HepG2 (cell line): ENCODE measurements at regions of chr5 and their contacts with region 1.

Region 1: GRCh38 chr5:96297290-96297689 is 135.8 kb downstream of the PCSK1 start:
- DNase-seq: peak; percentile 40
- ATAC-seq: peak; percentile 61
- H3K4me3 ChIP-seq: no peak overlapping the region
- H3K27ac ChIP-seq: peak overlapping the region; percentile 85
- H3K4me1 ChIP-seq: peaks cover 80% of the 10 kb centered on the region
- H3K27me3 ChIP-seq: no peaks in the 10 kb centered on the region
- CTCF ChIP-seq: no peak
- EP300 ChIP-seq: no peak
- POLR2A ChIP-seq: no peak
- RAD21 ChIP-seq: no peak

Region 2: GRCh38 chr5:95864944-95865504 is 432.3 kb before region 1 on chr5:
- CTCF ChIA-PET with region 1: no interaction called
- POLR2A ChIA-PET with region 1: interaction called, 3 read pairs
- in situ Hi-C with region 1: no loop called
- intact Hi-C with region 1: loop called (anchors 5 kb)
- DNase-seq: peak; percentile 99
- ATAC-seq: peak; percentile 91
- H3K4me3 ChIP-seq: peak overlapping the region in 2 of 3 experiments; percentile 32 to 41; a peak in 3 of 6 replicates
- H3K27ac ChIP-seq: peak overlapping the region; percentile 98
- H3K4me1 ChIP-seq: peaks cover 72% of the 10 kb centered on the region
- H3K27me3 ChIP-seq: no peaks in the 10 kb centered on the region
- CTCF ChIP-seq: no peak
- EP300 ChIP-seq: peak; percentile 48 to 89; a peak in 2 of 4 replicates
- POLR2A ChIP-seq: peak; percentile 54 to 73; a peak in 3 of 4 replicates
- RAD21 ChIP-seq: no peak

Region 3: GRCh38 chr5:96113170-96113939 is 183.9 kb before region 1 on chr5:
- CTCF ChIA-PET with region 1: no interaction called
- POLR2A ChIA-PET with region 1: no interaction called
- in situ Hi-C with region 1: no loop called
- intact Hi-C with region 1: loop called (anchors 2 kb)
- DNase-seq: no peak
- ATAC-seq: no peak
- H3K4me3 ChIP-seq: no peak overlapping the region
- H3K27ac ChIP-seq: no peak overlapping the region
- H3K4me1 ChIP-seq: peaks cover 89% of the 10 kb centered on the region
- H3K27me3 ChIP-seq: no peaks in the 10 kb centered on the region
- CTCF ChIP-seq: no peak
- EP300 ChIP-seq: no peak
- POLR2A ChIP-seq: no peak
- RAD21 ChIP-seq: no peak

Region 4: DNA sequence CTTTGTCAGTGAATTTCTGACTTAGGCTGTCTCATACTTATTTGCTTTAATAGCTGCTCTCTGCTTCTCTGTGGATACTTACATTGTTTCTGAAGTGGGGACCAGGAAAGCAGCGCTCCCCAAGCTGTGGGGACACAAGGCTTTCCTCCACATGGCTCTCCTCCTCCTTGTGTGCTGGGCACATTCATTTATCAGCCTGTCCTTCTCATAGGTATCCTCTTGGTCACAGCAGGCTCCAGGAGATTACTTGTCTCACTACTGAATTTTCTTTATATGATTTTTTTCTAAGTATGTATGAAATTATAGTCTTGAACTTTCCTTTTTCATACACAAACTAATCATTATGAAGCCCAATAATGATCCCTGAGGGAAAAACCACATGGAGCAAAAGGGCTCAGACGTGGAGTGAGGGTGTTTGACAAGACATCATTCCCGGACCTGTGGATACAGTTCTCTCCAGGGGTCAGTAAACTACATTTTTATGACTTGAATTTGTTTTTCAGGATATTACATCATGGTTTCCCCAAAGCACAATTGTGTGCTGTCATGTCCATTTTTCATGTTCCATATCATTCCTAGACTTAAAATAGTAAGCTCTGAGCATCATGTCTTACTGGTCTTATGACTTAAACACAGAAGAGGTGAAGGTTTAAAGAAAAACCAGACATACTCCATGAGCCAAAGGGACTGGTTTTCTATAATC is 98.8 kb before region 1 on chr5:
- CTCF ChIA-PET with region 1: no interaction called
- POLR2A ChIA-PET with region 1: interaction called, 7 read pairs
- in situ Hi-C with region 1: no loop called
- intact Hi-C with region 1: loop called (anchors 1 kb)
- DNase-seq: no peak
- ATAC-seq: no peak
- H3K4me3 ChIP-seq: no peak overlapping the region; a peak in 1 of 6 replicates
- H3K27ac ChIP-seq: peak overlapping the region; percentile 97
- H3K4me1 ChIP-seq: peaks cover 88% of the 10 kb centered on the region
- H3K27me3 ChIP-seq: no peaks in the 10 kb centered on the region
- CTCF ChIP-seq: no peak
- EP300 ChIP-seq: no peak
- POLR2A ChIP-seq: no peak
- RAD21 ChIP-seq: no peak

Region 5: DNA sequence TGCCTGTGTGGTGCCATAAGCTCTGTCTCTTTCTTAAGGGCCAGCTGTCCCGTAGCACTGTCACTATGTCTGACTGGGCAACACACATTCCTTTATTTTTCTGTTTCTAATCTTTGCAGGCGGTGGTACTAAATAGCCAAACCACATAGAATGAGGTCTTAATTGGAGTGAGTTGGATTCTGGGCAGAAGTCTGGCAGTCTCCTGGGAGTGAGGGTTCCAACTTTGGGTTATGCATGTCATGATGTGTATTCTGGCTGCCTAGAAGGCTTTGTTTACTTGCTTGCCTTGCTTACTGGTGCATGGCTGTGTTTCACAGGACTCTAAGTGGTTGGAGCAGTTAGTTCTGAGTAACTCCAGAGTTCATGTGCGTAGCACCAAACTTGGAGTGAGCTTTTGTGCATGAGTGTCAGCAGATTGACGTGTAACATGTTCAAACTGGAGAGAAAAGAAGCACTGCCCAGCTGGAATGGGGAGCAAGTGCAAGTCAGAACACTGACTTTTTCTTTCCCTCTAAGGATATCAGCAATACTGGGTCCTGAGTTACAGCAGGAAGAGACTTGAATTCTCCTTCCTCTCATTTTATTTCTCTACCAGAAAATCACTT is 50.1 kb before region 1 on chr5:
- CTCF ChIA-PET with region 1: no interaction called
- POLR2A ChIA-PET with region 1: no interaction called
- in situ Hi-C with region 1: no loop called
- intact Hi-C with region 1: loop called (anchors 1 kb)
- DNase-seq: no peak
- ATAC-seq: no peak
- H3K4me3 ChIP-seq: no peak overlapping the region
- H3K27ac ChIP-seq: no peak overlapping the region
- H3K4me1 ChIP-seq: peaks cover 77% of the 10 kb centered on the region
- H3K27me3 ChIP-seq: no peaks in the 10 kb centered on the region
- CTCF ChIP-seq: no peak
- EP300 ChIP-seq: no peak
- POLR2A ChIP-seq: no peak
- RAD21 ChIP-seq: no peak

Region 6: GRCh38 chr5:96331210-96331609 is 33.9 kb after region 1 on chr5:
- CTCF ChIA-PET with region 1: no interaction called
- POLR2A ChIA-PET with region 1: no interaction called
- in situ Hi-C with region 1: no loop called
- intact Hi-C with region 1: loop called (anchors 5 kb)
- DNase-seq: no peak
- ATAC-seq: no peak
- H3K4me3 ChIP-seq: no peak overlapping the region
- H3K27ac ChIP-seq: no peak overlapping the region
- H3K4me1 ChIP-seq: peaks cover 43% of the 10 kb centered on the region
- H3K27me3 ChIP-seq: no peaks in the 10 kb centered on the region
- CTCF ChIP-seq: no peak
- EP300 ChIP-seq: no peak
- POLR2A ChIP-seq: no peak
- RAD21 ChIP-seq: no peak